ENCODE measurements at regions of chr5 and their contacts with region 1.

Region 1: GRCh38 chr5:36414869-36415282 is 113.2 kb upstream of the RANBP3L start:
- DNase-seq: no peak
- H3K4me3 ChIP-seq: no peak overlapping the region
- H3K27ac ChIP-seq: no peak overlapping the region
- H3K4me1 ChIP-seq: peaks cover 3 to 45% (median 21%) of the 10 kb centered on the region in 3 donors
- H3K27me3 ChIP-seq: no peaks in the 10 kb centered on the region
- CTCF ChIP-seq: peak; percentile 19 to 62 (median 44)
- POLR2A ChIP-seq: no peak

Region 2: DNA sequence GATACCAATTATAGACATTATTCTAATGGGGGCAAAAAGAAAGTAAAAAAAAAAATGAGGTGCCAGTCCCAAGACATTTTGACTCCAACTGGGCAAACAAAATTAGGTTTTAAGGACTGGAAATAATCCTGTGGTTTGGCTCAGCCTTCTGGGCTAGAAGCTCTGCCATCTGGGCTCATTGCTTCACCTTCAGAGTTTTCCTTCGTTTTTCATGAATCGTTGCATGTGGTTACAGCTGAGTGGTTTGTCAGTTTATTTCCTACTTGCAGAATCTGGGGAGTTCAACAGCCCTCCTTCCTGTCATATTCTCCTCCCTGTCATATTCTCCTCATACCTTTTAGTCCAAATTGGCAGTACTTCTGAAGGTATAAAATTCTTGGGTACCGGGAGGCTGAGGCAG is 360.2 kb before region 1 on chr5:
- intact Hi-C with region 1: no loop called
- DNase-seq: no peak
- H3K4me3 ChIP-seq: no peak overlapping the region
- H3K27ac ChIP-seq: no peak overlapping the region
- H3K4me1 ChIP-seq: no peaks in the 10 kb centered on the region
- H3K27me3 ChIP-seq: peaks cover 0 to 4% (median 0%) of the 10 kb centered on the region in 4 donors
- CTCF ChIP-seq: no peak
- POLR2A ChIP-seq: no peak

Region 3: GRCh38 chr5:36459176-36460135 is 44.6 kb after region 1 on chr5:
- intact Hi-C with region 1: loop called (anchors 5 kb)
- DNase-seq: no peak
- H3K4me3 ChIP-seq: no peak overlapping the region
- H3K27ac ChIP-seq: no peak overlapping the region
- H3K4me1 ChIP-seq: peaks cover 0 to 29% (median 0%) of the 10 kb centered on the region in 3 donors
- H3K27me3 ChIP-seq: peaks cover 0 to 8% (median 0%) of the 10 kb centered on the region in 4 donors
- CTCF ChIP-seq: peak in 3 of 6 experiments; percentile 12 to 48 (median 28)
- POLR2A ChIP-seq: no peak

Region 4: DNA sequence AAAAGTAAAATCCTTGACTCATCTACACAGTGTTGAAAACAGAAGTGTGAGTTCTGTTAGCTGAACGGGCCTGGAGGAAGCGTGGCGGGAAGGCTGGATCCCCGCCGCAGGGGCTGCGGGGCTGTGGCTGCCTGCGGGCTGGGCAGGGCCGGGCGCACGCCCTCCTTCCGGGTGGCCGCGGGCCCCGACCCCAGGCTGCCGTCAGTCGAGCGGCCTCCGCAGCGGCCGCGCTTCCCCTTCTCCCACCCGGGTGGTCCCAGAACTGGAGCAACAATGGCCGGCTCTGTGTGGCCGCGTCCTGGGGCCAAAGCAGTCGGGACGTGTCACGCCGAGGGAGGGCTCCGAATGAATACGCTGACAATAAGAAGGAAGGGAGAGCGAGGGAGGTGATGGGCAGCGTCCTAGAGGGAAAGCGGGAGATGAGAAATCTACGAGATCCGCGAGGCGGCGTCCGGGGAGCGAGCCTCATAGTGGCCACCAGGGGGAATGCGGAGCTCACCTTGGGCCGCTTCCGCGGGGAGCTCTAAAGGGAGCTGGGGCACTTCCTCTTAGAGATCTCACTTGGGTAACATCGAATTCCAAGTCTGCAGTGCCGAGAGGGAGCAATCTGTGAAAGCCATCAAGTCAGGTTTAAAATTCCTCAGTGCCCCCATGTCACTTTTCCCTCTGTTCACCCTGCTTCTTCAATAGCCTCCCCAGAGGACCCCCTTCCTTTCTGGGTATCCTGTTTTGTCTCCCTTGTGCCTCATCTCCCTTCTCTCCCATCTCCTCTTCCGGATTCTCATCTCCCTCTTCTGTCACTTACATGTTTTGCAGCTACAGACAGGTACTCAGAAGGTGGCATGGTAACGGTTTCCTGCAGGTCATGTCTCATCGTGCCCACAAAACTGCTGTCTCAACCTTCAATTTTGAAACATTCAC is 275.4 kb after region 1 on chr5:
- intact Hi-C with region 1: loop called (anchors 5 kb)
- DNase-seq: no peak
- H3K4me3 ChIP-seq: peak overlapping the region; percentile 46 to 73 (median 52)
- H3K27ac ChIP-seq: peak overlapping the region; percentile 73 to 87 (median 86)
- H3K4me1 ChIP-seq: peaks cover 4 to 37% (median 21%) of the 10 kb centered on the region in 3 donors
- H3K27me3 ChIP-seq: peaks cover 0 to 14% (median 0%) of the 10 kb centered on the region in 4 donors
- CTCF ChIP-seq: peak; percentile 51 to 90 (median 78)
- POLR2A ChIP-seq: no peak